Activated T-helper 1 cell treated with anti-CD3 and anti-CD28 coated beads, Interleukin-12 subunit alpha, Interleukin-12 subunit beta, Interleukin-2, Interleukin-4 antibody, amounts not matched to agents 30 ng/mL and 10 ng/mL and 1 ng/mL, durations not matched to agents 14 hours and 24 hours and 36 hours (primary cell): ENCODE measurements at regions of chr5 and their contacts with region 1.

Region 1: GRCh38 chr5:65803699-65804391 is 81.8 kb downstream of the NLN start:
- DNase-seq: no peak
- H3K4me3 Mint-ChIP-seq: peak overlapping the region; percentile 55
- H3K27ac Mint-ChIP-seq: peak overlapping the region; percentile 31
- H3K4me1 Mint-ChIP-seq: peaks cover 39% of the 10 kb centered on the region
- H3K27me3 Mint-ChIP-seq: no peaks in the 10 kb centered on the region

Region 2: GRCh38 chr5:65742565-65743231 is 61.1 kb before region 1 on chr5:
- intact Hi-C with region 1: loop called (anchors 1 kb)
- DNase-seq: no peak
- H3K4me3 Mint-ChIP-seq: no peak overlapping the region
- H3K27ac Mint-ChIP-seq: no peak overlapping the region
- H3K4me1 Mint-ChIP-seq: peaks cover 16% of the 10 kb centered on the region
- H3K27me3 Mint-ChIP-seq: peaks cover 3% of the 10 kb centered on the region

Region 3: DNA sequence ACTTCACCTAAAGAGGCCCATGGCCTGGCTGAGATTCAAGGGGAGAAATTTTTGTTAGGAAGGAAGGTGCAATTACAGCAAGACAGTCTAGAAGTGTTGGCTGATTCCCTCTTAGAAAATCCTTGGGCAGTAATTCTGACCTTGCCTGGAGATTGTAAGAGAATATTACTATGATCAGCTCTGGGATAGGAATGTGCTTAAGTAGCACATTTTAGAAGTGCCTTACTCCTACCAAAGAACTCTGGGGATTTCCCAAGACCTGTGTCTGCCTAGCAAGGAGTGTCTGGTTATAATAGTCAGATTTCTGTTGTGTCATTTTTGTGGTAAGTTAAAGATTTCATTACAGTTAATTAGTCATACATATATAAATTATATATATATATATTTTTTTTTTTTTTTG is 29.5 kb before region 1 on chr5:
- intact Hi-C with region 1: loop called (anchors 1 kb)
- DNase-seq: peak; percentile 10
- H3K4me3 Mint-ChIP-seq: no peak overlapping the region
- H3K27ac Mint-ChIP-seq: peak overlapping the region; percentile 3
- H3K4me1 Mint-ChIP-seq: peaks cover 46% of the 10 kb centered on the region
- H3K27me3 Mint-ChIP-seq: no peaks in the 10 kb centered on the region

Region 4: DNA sequence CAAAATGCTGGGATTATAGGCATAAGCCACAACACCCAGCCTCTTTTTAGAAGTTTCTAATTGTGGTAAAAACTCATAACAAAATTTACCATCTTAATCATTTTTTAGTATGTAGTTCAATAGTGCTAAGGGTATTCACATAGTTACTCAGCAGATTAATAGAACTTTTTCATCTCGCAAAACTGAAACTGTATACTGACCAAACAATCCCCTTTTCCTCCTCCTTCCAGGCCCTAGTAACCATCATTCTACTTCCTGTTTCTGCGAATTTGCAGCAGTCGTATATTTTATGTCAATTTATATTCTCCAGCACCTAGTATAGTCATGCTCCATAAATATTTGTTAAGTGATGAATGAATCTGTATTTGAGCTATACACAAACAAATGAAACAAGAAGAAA is 36.2 kb after region 1 on chr5:
- intact Hi-C with region 1: loop called (anchors 1 kb)
- DNase-seq: no peak
- H3K4me3 Mint-ChIP-seq: no peak overlapping the region
- H3K27ac Mint-ChIP-seq: no peak overlapping the region
- H3K4me1 Mint-ChIP-seq: peaks cover under 1% of the 10 kb centered on the region
- H3K27me3 Mint-ChIP-seq: no peaks in the 10 kb centered on the region